ENCODE measurements at regions of chr4 and their contacts with region 1.

Region 1: DNA sequence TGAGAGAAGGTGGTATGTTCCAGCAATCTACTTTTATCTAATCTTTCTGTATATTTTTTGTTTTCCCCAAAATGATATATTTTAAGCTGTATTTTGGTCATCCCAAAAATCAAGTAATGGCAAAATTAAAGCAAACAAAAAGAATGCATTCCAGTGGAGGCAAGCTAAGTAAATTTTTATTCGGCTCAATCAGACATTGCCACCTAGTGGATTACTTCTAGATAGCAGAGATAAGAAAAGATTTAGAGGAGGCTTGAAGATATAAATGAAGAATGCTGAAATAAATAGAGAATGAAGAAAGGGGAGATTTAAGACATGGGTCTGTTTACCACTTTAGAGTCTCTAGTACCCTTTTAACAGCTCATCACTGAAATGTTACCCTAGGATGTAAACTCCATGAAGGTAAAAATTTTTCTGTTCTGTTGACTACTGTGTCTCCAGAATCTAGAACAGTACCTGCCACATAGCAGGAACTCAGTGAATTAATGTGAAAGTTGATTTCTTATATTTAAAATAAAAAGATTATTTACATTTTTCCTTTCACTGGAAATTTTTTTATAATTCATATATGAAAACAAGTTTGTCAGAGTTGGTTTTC is 110.9 kb upstream of the ANK2 start:
- DNase-seq: no peak
- H3K4me3 ChIP-seq: no peak overlapping the region
- H3K27ac ChIP-seq: no peak overlapping the region
- H3K4me1 ChIP-seq: no peaks in the 10 kb centered on the region
- H3K27me3 ChIP-seq: no peaks in the 10 kb centered on the region
- CTCF ChIP-seq: peak in 5 of 6 experiments; percentile 49 to 76 (median 66)
- POLR2A ChIP-seq: no peak

Region 2: GRCh38 chr4:112515304-112516067 is 423.1 kb before region 1 on chr4:
- intact Hi-C with region 1: no loop called
- DNase-seq: peak in 1 of 2 donors; percentile 32
- H3K4me3 ChIP-seq: peak overlapping the region; percentile 12 to 38 (median 34)
- H3K27ac ChIP-seq: no peak overlapping the region
- H3K4me1 ChIP-seq: peaks cover 24 to 32% of the 10 kb centered on the region in 2 donors
- H3K27me3 ChIP-seq: peaks cover 71% of the 10 kb centered on the region
- CTCF ChIP-seq: no peak
- POLR2A ChIP-seq: no peak

Region 3: DNA sequence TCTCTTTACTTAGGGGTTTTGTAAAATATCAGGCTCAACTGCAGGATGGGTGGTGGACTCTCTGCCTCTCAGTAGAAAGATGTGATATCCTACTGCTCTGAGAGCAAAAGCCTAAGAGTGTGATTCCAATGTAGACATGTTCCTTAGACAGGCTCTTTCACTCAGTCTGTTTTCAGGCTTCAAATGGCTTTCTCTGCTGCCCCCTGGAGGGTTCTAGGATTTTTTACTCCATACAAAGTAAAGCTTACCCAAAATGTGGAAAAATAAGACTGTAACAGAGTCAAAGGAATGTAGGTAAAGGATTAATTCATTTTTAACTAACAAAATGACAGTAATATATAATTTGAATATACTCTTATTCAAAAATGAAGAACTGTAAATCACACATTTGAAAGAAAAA is 334.0 kb before region 1 on chr4:
- intact Hi-C with region 1: no loop called
- DNase-seq: peak; percentile 24 to 47
- H3K4me3 ChIP-seq: no peak overlapping the region
- H3K27ac ChIP-seq: no peak overlapping the region
- H3K4me1 ChIP-seq: no peaks in the 10 kb centered on the region
- H3K27me3 ChIP-seq: no peaks in the 10 kb centered on the region
- CTCF ChIP-seq: peak in 4 of 6 experiments; percentile 12 to 61 (median 56)
- POLR2A ChIP-seq: no peak

Region 4: DNA sequence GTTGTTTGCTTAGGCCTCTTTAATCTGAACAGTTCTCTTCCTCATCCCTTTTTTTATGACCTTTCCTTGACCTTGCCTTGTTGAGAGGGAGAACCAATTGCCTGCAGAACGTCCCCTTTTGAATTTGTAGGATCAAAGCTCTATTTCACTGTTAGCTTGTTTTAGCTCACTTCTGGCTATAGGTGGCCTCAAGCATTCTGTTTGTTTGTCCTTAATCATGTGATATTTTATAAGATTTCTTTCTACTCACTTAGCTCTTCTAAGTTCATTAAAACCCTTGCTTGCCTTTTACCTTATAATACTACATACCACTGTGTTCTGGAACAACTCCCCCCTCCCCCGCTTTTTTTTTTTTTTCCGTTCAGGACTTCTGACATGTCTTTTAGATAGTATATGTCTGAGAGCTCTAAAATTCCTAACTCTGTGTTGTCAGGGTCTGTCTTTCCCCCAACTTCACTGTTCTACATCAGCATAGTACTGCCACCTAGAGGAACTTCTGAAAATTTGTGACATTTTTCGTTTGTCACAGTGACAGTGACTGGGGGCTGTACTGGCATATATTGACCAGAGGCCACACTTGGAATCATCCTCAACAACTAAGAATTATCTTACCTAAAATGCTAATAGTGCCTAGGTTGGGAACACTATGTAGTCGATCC is 173.1 kb before region 1 on chr4:
- intact Hi-C with region 1: loop called (anchors 10 kb)
- DNase-seq: no peak
- H3K4me3 ChIP-seq: no peak overlapping the region
- H3K27ac ChIP-seq: no peak overlapping the region
- H3K4me1 ChIP-seq: no peaks in the 10 kb centered on the region
- H3K27me3 ChIP-seq: no peaks in the 10 kb centered on the region
- CTCF ChIP-seq: peak in 2 of 6 experiments; percentile 16 to 42
- POLR2A ChIP-seq: no peak

Region 5: DNA sequence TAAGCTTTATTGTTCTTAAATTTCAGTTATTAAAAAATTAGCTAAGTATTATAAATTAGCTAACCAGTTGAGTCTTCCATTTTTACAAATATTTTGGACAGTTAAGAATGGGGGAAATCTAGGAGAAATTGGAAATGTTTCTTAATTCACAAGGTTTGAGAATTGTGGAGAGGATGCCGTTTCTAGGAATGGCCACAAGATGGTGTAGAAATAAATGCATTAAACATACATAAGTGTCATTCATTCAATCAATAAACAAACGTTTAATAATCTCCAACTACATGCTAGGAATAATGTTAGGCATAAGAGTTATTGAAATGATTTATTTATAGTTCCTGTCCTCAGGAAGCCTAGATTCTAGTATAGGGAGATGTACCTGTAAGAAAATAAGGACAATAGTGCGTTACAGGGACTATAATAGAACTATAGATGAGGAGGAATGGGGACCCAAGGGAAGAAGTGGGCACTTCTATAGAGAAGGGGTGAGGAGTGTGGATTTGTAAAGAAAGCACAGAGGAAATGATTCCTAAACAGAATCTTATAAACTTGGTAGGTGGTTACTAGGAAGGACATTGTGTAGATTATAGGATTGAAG is 84.8 kb before region 1 on chr4:
- intact Hi-C with region 1: loop called (anchors 10 kb)
- DNase-seq: no peak
- H3K4me3 ChIP-seq: no peak overlapping the region
- H3K27ac ChIP-seq: no peak overlapping the region
- H3K4me1 ChIP-seq: no peaks in the 10 kb centered on the region
- H3K27me3 ChIP-seq: no peaks in the 10 kb centered on the region
- CTCF ChIP-seq: peak in 3 of 6 experiments; percentile 40 to 51 (median 50)
- POLR2A ChIP-seq: no peak

Measured in thyroid gland (tissue), 4 donors.